Caco-2 (cell line): ENCODE measurements at regions of chr16 and their contacts with region 1.

Region 1: GRCh38 chr16:82630688-82631087 is 3.9 kb downstream of the CDH13 start:
- DNase-seq: no peak
- H3K4me3 ChIP-seq: no peak overlapping the region
- H3K4me3 Mint-ChIP-seq: no peak overlapping the region
- H3K27ac Mint-ChIP-seq: no peak overlapping the region
- H3K4me1 ChIP-seq: peaks cover 28% of the 10 kb centered on the region
- H3K4me1 Mint-ChIP-seq: peaks cover 30% of the 10 kb centered on the region
- H3K27me3 ChIP-seq: no peaks in the 10 kb centered on the region
- H3K27me3 Mint-ChIP-seq: peaks cover 8% of the 10 kb centered on the region
- CTCF ChIP-seq: peak; percentile 32 to 50

Region 2: DNA sequence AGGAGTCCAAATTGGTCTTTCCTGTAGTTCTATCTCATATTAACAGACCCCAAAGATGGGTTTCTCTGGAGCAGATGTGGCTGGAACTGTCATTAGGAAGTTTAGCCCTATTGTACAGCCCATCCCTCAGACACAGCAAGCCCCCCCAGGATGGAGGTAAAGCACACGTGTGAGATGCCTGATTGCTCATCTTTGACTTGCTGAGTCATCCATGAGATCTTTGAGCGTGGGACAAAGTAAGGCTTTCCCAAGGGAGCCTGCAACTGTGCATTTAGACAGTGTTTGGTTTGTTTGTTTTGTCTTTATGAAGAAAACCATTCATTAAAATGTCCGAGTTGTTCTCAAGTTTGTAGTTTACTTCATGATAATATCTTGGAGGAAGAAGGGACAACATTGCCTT is 149.2 kb before region 1 on chr16:
- CTCF ChIA-PET with region 1: no interaction called
- POLR2A ChIA-PET with region 1: no interaction called
- intact Hi-C with region 1: no loop called
- DNase-seq: no peak
- H3K4me3 ChIP-seq: no peak overlapping the region
- H3K4me3 Mint-ChIP-seq: no peak overlapping the region
- H3K27ac Mint-ChIP-seq: no peak overlapping the region
- H3K4me1 ChIP-seq: no peaks in the 10 kb centered on the region
- H3K4me1 Mint-ChIP-seq: no peaks in the 10 kb centered on the region
- H3K27me3 ChIP-seq: no peaks in the 10 kb centered on the region; the same call in 1 of the 2 replicates
- H3K27me3 Mint-ChIP-seq: peaks cover 24% of the 10 kb centered on the region
- CTCF ChIP-seq: no peak

Region 3: GRCh38 chr16:82715833-82716232 is 85.1 kb after region 1 on chr16:
- CTCF ChIA-PET with region 1: interaction called, 11 read pairs
- POLR2A ChIA-PET with region 1: no interaction called
- intact Hi-C with region 1: no loop called
- DNase-seq: no peak
- H3K4me3 ChIP-seq: no peak overlapping the region
- H3K4me3 Mint-ChIP-seq: no peak overlapping the region
- H3K27ac Mint-ChIP-seq: no peak overlapping the region
- H3K4me1 ChIP-seq: no peaks in the 10 kb centered on the region
- H3K4me1 Mint-ChIP-seq: no peaks in the 10 kb centered on the region
- H3K27me3 ChIP-seq: no peaks in the 10 kb centered on the region
- H3K27me3 Mint-ChIP-seq: peaks cover 7% of the 10 kb centered on the region
- CTCF ChIP-seq: no peak